Spleen (tissue), 13 donors: ENCODE measurements at regions of chr1 and their contacts with region 1.

Region 1: GRCh38 chr1:23539698-23540266 is 8.7 kb upstream of the E2F2 start:
- DNase-seq: peak; percentile 95
- H3K4me3 ChIP-seq: peak overlapping the region in 1 of 8 donors; percentile 29
- H3K27ac ChIP-seq: peak overlapping the region in 3 of 8 donors; percentile 13 to 55 (median 30)
- H3K4me1 ChIP-seq: peaks cover 9 to 49% (median 17%) of the 10 kb centered on the region in 6 donors
- H3K27me3 ChIP-seq: no peaks in the 10 kb centered on the region
- CTCF ChIP-seq: peak; percentile 92 to 97 (median 96)
- POLR2A ChIP-seq: no peak

Region 2: GRCh38 chr1:23496490-23497181 is 43.1 kb before region 1 on chr1:
- intact Hi-C with region 1: loop called (anchors 5 kb)
- DNase-seq: no peak
- H3K4me3 ChIP-seq: no peak overlapping the region
- H3K27ac ChIP-seq: no peak overlapping the region
- H3K4me1 ChIP-seq: peaks cover 0 to 11% (median 9%) of the 10 kb centered on the region in 6 donors
- H3K27me3 ChIP-seq: no peaks in the 10 kb centered on the region
- CTCF ChIP-seq: no peak
- POLR2A ChIP-seq: no peak

Region 3: DNA sequence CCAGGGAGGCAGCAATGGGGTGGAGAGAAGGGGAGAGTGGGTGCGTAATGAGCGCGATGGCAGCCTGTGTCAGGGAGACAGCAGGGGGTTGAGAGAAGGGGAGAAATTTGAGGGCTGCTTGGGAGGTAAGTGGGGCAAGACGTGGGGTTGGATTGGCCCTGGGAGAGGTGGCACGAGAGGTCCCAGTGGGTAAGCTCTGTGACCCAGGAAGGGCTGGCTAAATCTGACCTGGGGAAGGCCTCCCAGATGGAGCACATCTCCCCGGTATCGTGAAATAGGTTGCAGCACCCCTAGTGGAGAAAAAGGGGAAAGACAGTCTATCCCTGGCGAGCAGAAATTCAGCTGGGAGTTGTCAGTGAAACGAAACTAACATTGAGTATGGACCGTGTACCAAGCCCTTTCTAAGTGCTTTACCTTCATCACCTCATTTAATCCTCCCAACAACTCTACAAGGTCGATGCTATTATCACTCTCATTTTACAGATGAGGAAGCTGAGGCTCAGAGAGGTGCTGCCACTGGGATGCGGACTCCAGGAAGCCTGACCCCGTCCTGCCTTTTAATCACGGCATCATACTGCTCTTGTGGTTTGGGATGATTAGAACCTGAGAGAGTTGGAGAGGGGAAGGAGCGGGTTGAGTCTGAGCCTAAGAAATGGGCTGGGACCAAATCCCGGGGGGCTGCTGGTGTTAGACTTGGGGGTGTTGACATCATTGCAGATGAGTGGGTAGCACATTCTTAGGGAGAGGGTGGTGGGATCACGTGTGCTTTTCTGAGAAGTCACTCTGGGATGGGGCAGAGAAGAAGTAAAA is 95.3 kb after region 1 on chr1:
- intact Hi-C with region 1: loop called (anchors 1 kb)
- DNase-seq: no peak
- H3K4me3 ChIP-seq: peak overlapping the region in 6 of 8 donors; percentile 9 to 61 (median 26)
- H3K27ac ChIP-seq: peak overlapping the region in 7 of 8 donors; percentile 9 to 78 (median 67)
- H3K4me1 ChIP-seq: peaks cover 11 to 52% (median 19%) of the 10 kb centered on the region in 6 donors
- H3K27me3 ChIP-seq: peaks cover 0 to 13% (median 0%) of the 10 kb centered on the region in 7 donors
- CTCF ChIP-seq: peak; percentile 90 to 96 (median 94)
- POLR2A ChIP-seq: no peak